CD8-positive, alpha-beta memory T cell (primary cell): ENCODE measurements at regions of chr11 and their contacts with region 1.

Region 1: DNA sequence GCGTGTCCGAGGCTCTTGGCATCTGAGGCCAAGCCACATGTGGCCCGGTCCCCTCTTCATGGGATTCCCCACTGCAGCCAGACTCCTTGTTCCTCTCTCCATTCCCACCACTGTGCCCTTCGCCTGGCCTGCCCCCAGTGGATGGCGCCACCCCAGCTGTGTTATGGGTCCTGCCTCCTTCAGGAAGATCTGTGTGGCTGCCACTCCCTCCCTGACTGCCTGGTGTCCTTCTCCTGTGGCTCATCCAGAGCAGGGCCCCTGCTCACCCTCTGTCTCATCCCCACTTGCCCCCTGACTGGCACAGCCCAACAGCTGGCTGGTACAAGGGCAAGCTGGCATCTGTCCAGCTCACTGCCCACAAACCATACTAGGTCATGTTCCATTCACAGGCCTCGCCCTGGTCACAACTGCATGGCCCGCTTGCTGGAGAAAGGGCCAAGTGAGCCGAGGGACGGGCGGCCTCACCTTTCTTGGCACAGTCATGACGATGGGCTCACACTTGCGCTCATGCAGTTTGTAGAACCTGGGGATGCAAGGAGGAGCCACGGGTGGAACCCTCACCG is 1.9 kb upstream of the PTPRCAP start:
- DNase-seq: peak in 2 of 5 donors; percentile 32 to 44
- H3K4me3 ChIP-seq: peak overlapping the region; percentile 95
- H3K4me3 Mint-ChIP-seq: peak overlapping the region; percentile 96 to 99 (median 98)
- H3K27ac ChIP-seq: peak overlapping the region; percentile 24
- H3K27ac Mint-ChIP-seq: peak overlapping the region; percentile 86 to 99 (median 94)
- H3K4me1 ChIP-seq: peaks cover 53% of the 10 kb centered on the region
- H3K4me1 Mint-ChIP-seq: peaks cover 45 to 77% (median 46%) of the 10 kb centered on the region in 3 donors
- H3K27me3 ChIP-seq: no peaks in the 10 kb centered on the region
- H3K27me3 Mint-ChIP-seq: peaks cover 0 to 1% of the 10 kb centered on the region in 2 donors

Region 2: DNA sequence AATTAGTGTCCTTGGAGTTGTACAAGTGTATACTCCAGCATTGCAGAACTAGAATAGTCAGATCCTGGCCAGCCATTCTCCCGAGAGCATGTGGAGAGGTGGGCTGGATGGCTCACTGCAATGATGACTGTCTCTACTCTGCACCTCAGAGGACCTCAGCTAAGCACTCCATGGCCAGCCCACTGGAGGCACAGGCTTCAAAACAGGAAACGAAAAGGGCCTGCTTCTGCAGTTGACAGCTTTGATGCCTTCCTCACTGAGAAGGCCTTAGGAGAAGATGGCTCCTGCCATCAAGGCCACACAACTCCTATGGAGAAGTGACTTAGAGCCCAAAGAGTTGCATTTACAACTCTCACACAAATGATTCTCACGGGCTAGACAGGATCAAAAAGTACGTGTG is 95.1 kb before region 1 on chr11:
- CTCF ChIA-PET with region 1: no interaction called
- POLR2A ChIA-PET with region 1: no interaction called
- DNase-seq: peak in 1 of 5 donors; percentile 32
- H3K4me3 ChIP-seq: no peak overlapping the region
- H3K4me3 Mint-ChIP-seq: no peak overlapping the region
- H3K27ac ChIP-seq: no peak overlapping the region
- H3K27ac Mint-ChIP-seq: peak overlapping the region in 4 of 8 donors; percentile 21 to 84 (median 78)
- H3K4me1 ChIP-seq: peaks cover 31% of the 10 kb centered on the region
- H3K4me1 Mint-ChIP-seq: peaks cover 11 to 33% (median 28%) of the 10 kb centered on the region in 3 donors
- H3K27me3 ChIP-seq: no peaks in the 10 kb centered on the region
- H3K27me3 Mint-ChIP-seq: no peaks in the 10 kb centered on the region

Region 3: GRCh38 chr11:67391304-67392132 is 47.9 kb before region 1 on chr11 and contains the start of gene RAD9A:
- CTCF ChIA-PET with region 1: interaction called, 6 read pairs
- POLR2A ChIA-PET with region 1: interaction called, 27 read pairs
- DNase-seq: peak; percentile 88 to 96 (median 94)
- H3K4me3 ChIP-seq: peak within 1 kb of the TSS; percentile 96
- H3K4me3 Mint-ChIP-seq: peak within 1 kb of the TSS; percentile 86 to 94 (median 87)
- H3K27ac ChIP-seq: peak within 1 kb of the TSS; percentile 83
- H3K27ac Mint-ChIP-seq: peak within 1 kb of the TSS; percentile 80 to 96 (median 88)
- H3K4me1 ChIP-seq: peaks cover 25% of the 10 kb centered on the region
- H3K4me1 Mint-ChIP-seq: peaks cover 30 to 48% (median 36%) of the 10 kb centered on the region in 3 donors
- H3K27me3 ChIP-seq: no peaks in the 10 kb centered on the region
- H3K27me3 Mint-ChIP-seq: no peaks in the 10 kb centered on the region
- total RNA-seq, gene RAD9A: 36.8 to 38.8 TPM

Region 4: GRCh38 chr11:67409261-67409666 is 30.1 kb before region 1 on chr11:
- CTCF ChIA-PET with region 1: interaction called, 59 read pairs
- POLR2A ChIA-PET with region 1: interaction called, 203 read pairs
- DNase-seq: peak; percentile 62 to 89 (median 83)
- H3K4me3 ChIP-seq: peak overlapping the region; percentile 82
- H3K4me3 Mint-ChIP-seq: peak overlapping the region; percentile 95 to 99 (median 98)
- H3K27ac ChIP-seq: peak overlapping the region; percentile 38
- H3K27ac Mint-ChIP-seq: peak overlapping the region; percentile 45 to 99 (median 92)
- H3K4me1 ChIP-seq: peaks cover 93% of the 10 kb centered on the region
- H3K4me1 Mint-ChIP-seq: peaks cover 76 to 93% (median 82%) of the 10 kb centered on the region in 3 donors
- H3K27me3 ChIP-seq: no peaks in the 10 kb centered on the region
- H3K27me3 Mint-ChIP-seq: peaks cover 0 to 2% of the 10 kb centered on the region in 2 donors

Region 5: GRCh38 chr11:67428052-67428914 is 11.1 kb before region 1 on chr11 and contains the start of gene RPS6KB2:
- CTCF ChIA-PET with region 1: interaction called, 18 read pairs
- POLR2A ChIA-PET with region 1: interaction called, 39 read pairs
- DNase-seq: peak; percentile 96 to 99 (median 99)
- H3K4me3 ChIP-seq: peak within 1 kb of the TSS; percentile 76
- H3K4me3 Mint-ChIP-seq: peak within 1 kb of the TSS; percentile 94 to 100 (median 99)
- H3K27ac ChIP-seq: peak within 1 kb of the TSS; percentile 91
- H3K27ac Mint-ChIP-seq: peak within 1 kb of the TSS; percentile 93 to 99 (median 98)
- H3K4me1 ChIP-seq: peaks cover 39% of the 10 kb centered on the region
- H3K4me1 Mint-ChIP-seq: peaks cover 24 to 60% (median 31%) of the 10 kb centered on the region in 3 donors
- H3K27me3 ChIP-seq: no peaks in the 10 kb centered on the region
- H3K27me3 Mint-ChIP-seq: peaks cover 0 to 6% of the 10 kb centered on the region in 2 donors
- total RNA-seq, gene RPS6KB2: 86.0 to 88.4 TPM

Region 6: GRCh38 chr11:67458266-67458665 is 18.9 kb after region 1 on chr11:
- CTCF ChIA-PET with region 1: interaction called, 8 read pairs
- POLR2A ChIA-PET with region 1: interaction called, 26 read pairs
- DNase-seq: no peak
- H3K4me3 ChIP-seq: no peak overlapping the region
- H3K4me3 Mint-ChIP-seq: no peak overlapping the region
- H3K27ac ChIP-seq: no peak overlapping the region
- H3K27ac Mint-ChIP-seq: no peak overlapping the region
- H3K4me1 ChIP-seq: no peaks in the 10 kb centered on the region
- H3K4me1 Mint-ChIP-seq: peaks cover 4 to 8% (median 5%) of the 10 kb centered on the region in 3 donors
- H3K27me3 ChIP-seq: no peaks in the 10 kb centered on the region
- H3K27me3 Mint-ChIP-seq: peaks cover 0 to 3% of the 10 kb centered on the region in 2 donors

Region 7: DNA sequence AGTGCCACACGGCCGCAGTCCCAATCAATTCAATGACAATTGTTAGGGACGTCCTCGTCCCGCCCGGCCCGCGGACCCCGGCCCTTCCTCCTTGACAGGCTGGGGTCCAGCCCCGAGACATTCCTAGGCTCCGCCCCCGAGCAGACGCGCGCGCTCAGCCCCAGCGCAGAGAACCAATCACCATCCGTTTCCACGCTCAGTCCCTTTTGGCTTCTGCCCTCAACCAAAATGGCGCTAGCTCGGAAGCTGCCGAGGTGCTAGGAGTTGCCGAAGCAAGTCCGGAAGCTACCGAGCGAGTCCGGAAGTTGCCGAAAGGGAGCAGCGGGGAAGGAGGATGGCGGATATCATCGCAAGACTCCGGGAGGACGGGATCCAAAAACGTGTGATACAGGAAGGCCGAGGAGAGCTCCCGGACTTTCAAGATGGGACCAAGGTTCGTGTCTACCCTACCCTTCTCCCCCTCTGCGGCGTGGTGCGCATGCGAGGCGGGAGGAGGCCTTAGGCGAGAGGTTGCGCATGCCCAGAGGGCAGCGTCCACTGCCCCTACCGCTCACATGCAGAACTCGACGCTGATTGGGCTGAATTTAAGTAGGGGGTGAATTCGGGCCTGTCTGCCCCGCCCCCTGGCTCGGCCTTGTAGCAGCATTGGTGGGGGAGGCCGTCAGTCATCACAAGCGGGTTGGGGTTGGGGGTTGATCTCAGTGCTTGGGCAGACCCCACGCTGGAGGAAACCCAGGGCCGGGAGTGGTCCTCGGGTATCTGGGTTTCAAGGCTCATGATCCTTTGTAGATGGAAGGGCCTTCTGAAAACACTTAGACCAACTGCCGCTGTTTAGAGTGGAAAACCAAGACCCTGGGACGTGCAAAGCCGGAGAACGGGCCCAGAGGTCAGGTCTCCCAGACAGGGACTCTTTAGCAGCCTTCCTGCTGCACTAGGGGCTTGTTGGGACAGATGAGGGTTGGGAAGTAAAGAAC is 43.7 kb after region 1 on chr11 and contains the start of gene AIP:
- CTCF ChIA-PET with region 1: interaction called, 6 read pairs
- POLR2A ChIA-PET with region 1: interaction called, 38 read pairs
- DNase-seq: peak; percentile 96 to 98 (median 96)
- H3K4me3 ChIP-seq: peak within 1 kb of the TSS; percentile 96
- H3K4me3 Mint-ChIP-seq: peak within 1 kb of the TSS; percentile 87 to 99 (median 95)
- H3K27ac ChIP-seq: peak within 1 kb of the TSS; percentile 80
- H3K27ac Mint-ChIP-seq: peak within 1 kb of the TSS; percentile 90 to 100 (median 98)
- H3K4me1 ChIP-seq: peaks cover 51% of the 10 kb centered on the region
- H3K4me1 Mint-ChIP-seq: peaks cover 49 to 58% (median 57%) of the 10 kb centered on the region in 3 donors
- H3K27me3 ChIP-seq: no peaks in the 10 kb centered on the region
- H3K27me3 Mint-ChIP-seq: no peaks in the 10 kb centered on the region
- total RNA-seq, gene AIP: 160 to 171 TPM